Prostate gland (tissue), 2 donors: ENCODE measurements at regions of chr1 and their contacts with region 1.

Region 1: DNA sequence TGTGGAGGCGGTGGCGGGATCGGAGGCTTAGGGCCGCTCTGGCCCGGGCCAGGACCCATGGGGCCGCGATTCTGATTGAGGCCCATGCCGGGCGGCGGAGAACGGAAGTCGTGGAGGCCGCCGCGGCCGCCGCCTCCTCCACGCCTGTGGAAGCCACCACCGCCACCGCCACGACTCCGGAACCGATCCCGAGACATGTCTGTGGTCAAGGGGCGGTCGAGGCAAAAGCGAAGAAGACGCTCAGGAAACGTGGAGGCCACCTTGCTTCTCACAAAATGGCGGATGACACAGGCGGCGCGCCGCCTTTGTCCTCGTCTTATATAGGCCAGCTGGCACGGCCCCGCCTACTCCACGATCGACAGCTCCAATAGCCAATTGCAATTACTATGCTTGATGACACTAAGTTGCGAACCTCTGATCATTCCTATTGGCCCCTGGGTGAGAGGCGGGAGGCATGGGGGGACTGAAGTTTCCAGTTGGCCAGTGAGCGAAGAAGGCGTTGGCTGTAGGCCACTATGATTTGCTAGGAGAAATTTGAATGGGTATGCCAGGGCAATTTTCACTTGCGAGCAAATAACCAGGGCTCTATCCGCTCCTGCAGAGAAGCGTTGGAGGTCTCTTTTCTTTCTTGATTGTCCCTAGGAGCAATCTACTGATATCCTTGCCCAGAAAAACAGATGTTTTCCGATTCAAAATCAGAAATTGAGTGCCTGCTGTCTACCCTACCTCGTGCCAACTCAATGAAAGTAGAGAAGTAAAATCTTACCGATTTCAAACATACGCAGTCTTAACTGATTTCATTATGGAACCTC is at the start of gene SFPQ:
- DNase-seq: peak; percentile 99
- H3K4me3 ChIP-seq: peak within 1 kb of the TSS; percentile 97 to 100
- H3K27ac ChIP-seq: peak within 1 kb of the TSS; percentile 99
- H3K4me1 ChIP-seq: peaks cover 19% of the 10 kb centered on the region
- H3K27me3 ChIP-seq: no peaks in the 10 kb centered on the region
- CTCF ChIP-seq: peak in 1 of 4 experiments; percentile 25
- POLR2A ChIP-seq: peak; percentile 91
- total RNA-seq, gene SFPQ: 178 to 311 TPM

Region 2: DNA sequence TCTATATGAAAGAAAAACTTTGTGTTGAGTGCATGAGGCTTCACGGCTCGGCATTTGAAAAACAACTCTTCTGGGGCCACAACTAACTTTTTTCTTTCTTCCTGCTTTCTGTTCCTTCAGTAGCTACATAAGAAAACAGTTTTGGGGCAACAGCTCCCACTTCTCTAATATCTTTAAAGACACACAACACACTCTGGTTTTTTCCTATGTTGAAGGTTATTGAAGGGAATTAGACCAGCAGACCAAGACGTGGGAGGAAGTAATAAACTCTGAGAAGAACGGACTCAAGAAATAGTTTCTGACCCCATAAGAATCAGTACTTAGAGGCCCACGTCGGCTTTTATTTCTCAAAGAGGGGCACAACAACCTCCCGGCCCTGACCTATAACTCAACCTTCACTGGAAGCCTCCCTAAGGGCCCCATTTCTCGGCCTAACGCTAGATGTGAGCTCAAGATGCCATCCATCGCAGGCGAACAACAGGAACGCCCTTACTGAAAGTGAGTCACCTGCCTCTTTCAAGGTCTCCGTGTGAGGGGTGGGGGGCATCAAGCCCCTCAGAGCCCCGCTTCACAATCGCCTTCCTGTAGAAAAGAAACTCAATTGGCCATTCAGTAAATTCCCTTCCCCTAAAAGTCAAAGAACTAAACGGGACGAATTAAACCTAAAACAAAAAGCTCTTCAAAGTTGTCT is 162.2 kb before region 1 on chr1:
- intact Hi-C with region 1: loop called (anchors 2 kb)
- DNase-seq: peak; percentile 8
- H3K4me3 ChIP-seq: peak overlapping the region; percentile 54 to 69
- H3K27ac ChIP-seq: peak overlapping the region; percentile 95 to 97
- H3K4me1 ChIP-seq: no peaks in the 10 kb centered on the region
- H3K27me3 ChIP-seq: no peaks in the 10 kb centered on the region
- CTCF ChIP-seq: no peak
- POLR2A ChIP-seq: no peak

Region 3: DNA sequence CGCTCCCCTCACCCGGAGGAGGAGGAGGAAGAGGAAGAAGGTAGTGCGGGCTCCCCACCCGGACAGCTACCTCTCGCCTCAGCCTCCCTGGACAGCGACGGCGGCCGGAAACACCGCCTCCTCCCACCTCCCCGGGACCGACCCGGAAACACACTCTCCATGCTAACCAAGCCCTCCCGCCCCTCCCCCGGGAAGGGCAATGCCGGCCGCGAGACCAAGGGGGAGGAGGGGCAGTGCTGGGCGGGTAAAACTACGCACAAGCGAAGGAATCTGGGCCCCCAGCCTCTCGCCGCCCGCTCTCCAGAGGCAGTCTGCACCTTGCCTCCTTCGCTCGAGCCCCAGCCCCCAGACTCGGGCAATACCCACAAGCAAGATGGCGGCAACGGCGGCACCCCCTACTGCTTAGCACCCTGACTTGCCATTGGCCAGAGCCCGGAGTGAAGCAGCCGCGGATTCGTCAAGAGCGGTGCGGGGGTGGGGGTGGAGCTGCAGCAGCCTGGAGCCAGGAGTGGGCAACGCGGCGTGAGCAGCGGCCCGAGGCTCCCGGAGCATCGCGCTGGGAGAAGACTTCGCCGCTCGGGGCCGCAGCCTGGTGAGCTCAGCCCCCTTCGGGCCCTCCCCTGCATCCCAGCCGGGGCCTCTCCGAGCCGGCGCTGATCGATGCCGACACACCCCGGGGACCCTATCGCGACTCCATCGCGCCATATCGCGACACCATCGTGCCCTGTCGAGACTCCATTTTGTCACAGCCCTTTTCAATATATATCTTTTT is 364.4 kb after region 1 on chr1 and contains the starts of genes KIAA0319L and NCDN:
- intact Hi-C with region 1: loop called (anchors 5 kb)
- DNase-seq: peak; percentile 96
- H3K4me3 ChIP-seq: peak within 1 kb of the TSS; percentile 66 to 80
- H3K27ac ChIP-seq: peak within 1 kb of the TSS; percentile 94 to 95
- H3K4me1 ChIP-seq: peaks cover 10% of the 10 kb centered on the region
- H3K27me3 ChIP-seq: no peaks in the 10 kb centered on the region
- CTCF ChIP-seq: no peak
- POLR2A ChIP-seq: peak; percentile 44
- total RNA-seq, gene KIAA0319L: 109 to 124 TPM
- total RNA-seq, gene NCDN: 37.6 to 49.4 TPM